Naive thymus-derived CD4-positive, alpha-beta T cell (primary cell): ENCODE measurements at regions of chr2 and their contacts with region 1.

Region 1: GRCh38 chr2:126657636-126658318 is 1.8 kb downstream of the GYPC start:
- DNase-seq: peak; percentile 40 to 79 (median 73)
- ATAC-seq: peak; percentile 72
- H3K4me3 ChIP-seq: peak overlapping the region; percentile 99
- H3K4me3 Mint-ChIP-seq: peak overlapping the region; percentile 88 to 100 (median 96)
- H3K27ac ChIP-seq: peak overlapping the region; percentile 98
- H3K27ac Mint-ChIP-seq: peak overlapping the region; percentile 93 to 100 (median 98)
- H3K4me1 ChIP-seq: peaks cover 41 to 59% of the 10 kb centered on the region in 2 donors
- H3K4me1 Mint-ChIP-seq: peaks cover 50 to 78% (median 63%) of the 10 kb centered on the region in 7 donors
- H3K27me3 ChIP-seq: no peaks in the 10 kb centered on the region
- H3K27me3 Mint-ChIP-seq: no peaks in the 10 kb centered on the region

Region 2: DNA sequence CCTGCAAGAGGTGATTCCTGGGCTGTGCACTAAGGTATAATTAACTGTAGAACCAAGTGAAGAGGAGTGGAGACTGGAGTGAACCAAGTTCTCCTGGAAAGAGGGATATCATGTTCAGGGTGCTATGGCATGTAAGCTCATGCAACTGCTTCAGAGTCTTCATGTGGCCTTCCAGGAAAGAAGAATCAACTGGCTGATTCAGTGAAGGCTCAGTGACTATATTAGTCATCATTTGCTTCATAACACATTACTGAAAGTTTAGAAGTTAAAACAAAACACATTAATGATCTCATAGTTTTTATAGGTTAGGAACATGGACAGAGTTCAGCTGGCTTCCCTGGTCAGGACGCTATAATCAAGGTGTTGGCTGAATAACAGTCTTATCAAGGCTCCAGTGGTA is 1202.7 kb before region 1 on chr2:
- CTCF ChIA-PET with region 1: no interaction called
- POLR2A ChIA-PET with region 1: no interaction called
- intact Hi-C with region 1: no loop called
- DNase-seq: no peak
- ATAC-seq: no peak
- H3K4me3 ChIP-seq: no peak overlapping the region
- H3K4me3 Mint-ChIP-seq: no peak overlapping the region
- H3K27ac ChIP-seq: no peak overlapping the region
- H3K27ac Mint-ChIP-seq: no peak overlapping the region
- H3K4me1 ChIP-seq: no peaks in the 10 kb centered on the region
- H3K4me1 Mint-ChIP-seq: no peaks in the 10 kb centered on the region
- H3K27me3 ChIP-seq: peaks cover 0 to 2% of the 10 kb centered on the region in 2 donors
- H3K27me3 Mint-ChIP-seq: no peaks in the 10 kb centered on the region

Region 3: DNA sequence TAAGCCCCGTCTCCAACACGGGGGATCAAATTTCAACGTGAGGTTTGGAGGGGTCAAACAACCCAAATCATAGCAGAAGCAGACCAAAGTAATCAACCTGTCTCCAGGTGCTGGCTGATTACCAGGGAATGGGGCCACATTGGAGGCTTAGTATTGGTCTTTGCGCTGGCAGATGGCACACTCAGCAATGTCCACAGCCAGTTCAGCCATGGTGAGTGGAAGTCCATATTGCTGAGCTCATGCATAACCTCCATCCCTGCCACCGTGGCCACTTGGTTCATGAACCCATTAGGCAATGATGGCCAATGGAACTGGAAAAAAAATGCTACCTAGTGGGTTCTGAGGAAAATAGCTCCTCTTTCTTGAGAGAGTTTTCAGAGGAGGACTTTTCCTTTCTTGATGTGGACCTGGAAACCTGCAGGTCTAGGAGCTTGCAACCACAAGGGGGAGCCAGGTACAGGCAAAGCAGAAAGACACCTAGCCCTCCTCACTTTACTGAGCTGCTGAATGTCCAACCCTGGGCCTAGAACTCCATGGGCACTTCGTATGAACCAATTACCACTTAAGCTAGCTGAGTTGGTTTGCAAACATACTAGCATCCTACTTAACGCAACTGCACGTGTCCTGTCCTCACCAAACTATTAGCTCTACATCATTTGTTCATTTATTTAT is 129.8 kb before region 1 on chr2:
- CTCF ChIA-PET with region 1: interaction called, 6 read pairs
- POLR2A ChIA-PET with region 1: interaction called, 3 read pairs
- intact Hi-C with region 1: loop called (anchors 1 to 2 kb)
- DNase-seq: peak; percentile 43 to 74 (median 64)
- ATAC-seq: peak; percentile 79
- H3K4me3 ChIP-seq: no peak overlapping the region
- H3K4me3 Mint-ChIP-seq: no peak overlapping the region
- H3K27ac ChIP-seq: no peak overlapping the region
- H3K27ac Mint-ChIP-seq: no peak overlapping the region
- H3K4me1 ChIP-seq: no peaks in the 10 kb centered on the region
- H3K4me1 Mint-ChIP-seq: no peaks in the 10 kb centered on the region
- H3K27me3 ChIP-seq: no peaks in the 10 kb centered on the region
- H3K27me3 Mint-ChIP-seq: peaks cover 0 to 3% (median 0%) of the 10 kb centered on the region in 5 donors

Region 4: GRCh38 chr2:126616606-126617069 is 41.1 kb before region 1 on chr2:
- CTCF ChIA-PET with region 1: no interaction called
- POLR2A ChIA-PET with region 1: no interaction called
- intact Hi-C with region 1: no loop called
- DNase-seq: no peak
- ATAC-seq: no peak
- H3K4me3 ChIP-seq: no peak overlapping the region
- H3K4me3 Mint-ChIP-seq: no peak overlapping the region
- H3K27ac ChIP-seq: no peak overlapping the region
- H3K27ac Mint-ChIP-seq: peak overlapping the region in 1 of 9 donors; percentile 59
- H3K4me1 ChIP-seq: no peaks in the 10 kb centered on the region
- H3K4me1 Mint-ChIP-seq: no peaks in the 10 kb centered on the region
- H3K27me3 ChIP-seq: no peaks in the 10 kb centered on the region
- H3K27me3 Mint-ChIP-seq: peaks cover 0 to 4% (median 0%) of the 10 kb centered on the region in 5 donors

Region 5: DNA sequence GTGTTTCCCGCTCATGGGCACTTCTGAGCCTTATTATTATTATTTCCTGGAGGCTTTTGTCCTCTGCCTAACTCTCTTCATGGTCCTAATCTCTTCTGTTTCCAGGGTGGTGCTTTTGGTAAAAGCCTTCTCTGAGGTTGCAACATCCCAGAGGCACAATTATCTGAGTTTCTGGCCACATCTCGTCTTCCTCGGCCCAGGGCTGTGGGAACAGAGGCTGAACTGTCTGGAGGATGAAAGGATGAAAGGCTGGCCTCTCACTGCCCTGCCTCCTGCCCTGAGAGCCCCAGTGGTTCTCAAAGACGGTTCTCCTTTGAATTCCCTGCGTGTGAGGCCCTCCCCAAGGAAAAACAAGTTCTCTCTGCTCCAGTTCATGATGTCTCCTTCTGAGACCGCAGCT is 12.0 kb after region 1 on chr2:
- CTCF ChIA-PET with region 1: no interaction called
- POLR2A ChIA-PET with region 1: interaction called, 4 read pairs
- intact Hi-C with region 1: loop called (anchors 1 kb)
- DNase-seq: no peak
- ATAC-seq: no peak
- H3K4me3 ChIP-seq: no peak overlapping the region
- H3K4me3 Mint-ChIP-seq: peak overlapping the region in 2 of 10 donors; percentile 24 to 37
- H3K27ac ChIP-seq: no peak overlapping the region
- H3K27ac Mint-ChIP-seq: peak overlapping the region in 3 of 9 donors; percentile 22 to 72 (median 59)
- H3K4me1 ChIP-seq: peaks cover 13 to 29% of the 10 kb centered on the region in 2 donors
- H3K4me1 Mint-ChIP-seq: peaks cover 40 to 95% (median 89%) of the 10 kb centered on the region in 7 donors
- H3K27me3 ChIP-seq: no peaks in the 10 kb centered on the region
- H3K27me3 Mint-ChIP-seq: no peaks in the 10 kb centered on the region

Region 6: DNA sequence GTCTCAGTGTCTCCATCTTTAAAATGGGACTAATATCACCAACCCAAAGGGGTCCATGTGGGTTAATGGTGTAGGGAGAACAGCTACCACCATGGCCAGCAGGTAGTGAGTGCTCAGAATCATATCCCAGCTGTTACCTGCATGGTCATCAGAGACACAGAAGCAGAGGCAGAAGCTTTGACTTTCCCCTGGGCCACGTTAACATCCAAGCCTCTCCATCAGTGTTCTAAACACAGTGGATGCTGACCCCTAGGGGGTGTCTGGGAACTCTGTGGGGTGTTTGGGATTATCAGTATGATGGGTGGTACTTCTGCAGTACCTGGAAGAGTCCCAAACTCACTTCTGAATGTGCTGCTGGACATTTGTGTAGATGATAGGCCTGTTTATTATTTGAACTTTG is 91.8 kb after region 1 on chr2:
- CTCF ChIA-PET with region 1: no interaction called
- POLR2A ChIA-PET with region 1: no interaction called
- intact Hi-C with region 1: loop called in 1 of 2 experiments (anchors 5 kb)
- DNase-seq: peak in 2 of 9 donors; percentile 14 to 15
- ATAC-seq: no peak
- H3K4me3 ChIP-seq: no peak overlapping the region
- H3K4me3 Mint-ChIP-seq: no peak overlapping the region
- H3K27ac ChIP-seq: no peak overlapping the region
- H3K27ac Mint-ChIP-seq: peak overlapping the region in 2 of 9 donors; percentile 5 to 11
- H3K4me1 ChIP-seq: no peaks in the 10 kb centered on the region
- H3K4me1 Mint-ChIP-seq: peaks cover 2 to 18% (median 6%) of the 10 kb centered on the region in 7 donors
- H3K27me3 ChIP-seq: no peaks in the 10 kb centered on the region
- H3K27me3 Mint-ChIP-seq: peaks cover 0 to 8% (median 0%) of the 10 kb centered on the region in 5 donors

Region 7: DNA sequence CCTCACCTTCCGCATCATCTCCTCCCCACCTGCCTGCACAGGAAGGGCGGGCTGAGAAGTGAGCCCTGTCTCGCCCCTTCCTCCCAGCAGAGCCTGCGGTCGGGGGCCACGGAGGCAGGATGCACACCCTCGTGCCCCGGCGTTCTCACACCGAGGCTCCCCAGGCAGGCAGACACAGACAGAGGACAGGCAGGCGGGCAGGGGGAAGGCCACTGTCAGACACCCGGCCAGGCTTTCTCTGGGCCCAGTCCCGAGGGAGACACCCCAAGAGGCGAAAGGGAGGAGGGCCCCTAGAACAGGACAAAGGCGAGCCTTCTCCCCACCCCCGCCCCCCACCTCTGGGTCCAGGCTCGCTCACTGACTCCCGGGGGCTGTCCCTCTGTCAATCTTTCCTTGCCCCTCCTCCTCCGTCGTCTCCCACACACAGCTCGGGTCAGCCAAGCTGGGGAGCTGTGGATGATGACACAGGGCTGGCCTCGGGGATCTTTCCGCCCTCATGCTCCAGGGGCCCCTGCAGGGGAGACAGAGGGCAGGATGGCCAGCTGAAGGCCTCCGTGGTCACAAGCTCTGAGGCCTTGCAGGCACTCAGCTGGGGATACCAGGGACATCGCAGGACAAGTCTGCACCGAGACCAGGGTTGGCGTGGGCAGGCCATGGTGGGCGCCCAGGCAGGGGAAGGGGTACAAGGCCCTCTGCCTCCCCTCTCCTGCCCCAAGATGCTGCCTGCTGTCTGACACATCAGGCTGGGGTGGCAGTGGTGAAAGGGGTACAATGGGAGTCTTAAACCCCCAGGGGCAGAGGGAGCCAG is 424.3 kb after region 1 on chr2:
- CTCF ChIA-PET with region 1: no interaction called
- POLR2A ChIA-PET with region 1: no interaction called
- intact Hi-C with region 1: loop called (anchors 5 to 10 kb)
- DNase-seq: peak; percentile 64 to 87 (median 83)
- ATAC-seq: peak; percentile 83
- H3K4me3 ChIP-seq: peak overlapping the region; percentile 99
- H3K4me3 Mint-ChIP-seq: peak overlapping the region; percentile 89 to 97 (median 94)
- H3K27ac ChIP-seq: peak overlapping the region; percentile 89
- H3K27ac Mint-ChIP-seq: peak overlapping the region; percentile 94 to 99 (median 98)
- H3K4me1 ChIP-seq: peaks cover 78 to 80% of the 10 kb centered on the region in 2 donors
- H3K4me1 Mint-ChIP-seq: peaks cover 65 to 95% (median 83%) of the 10 kb centered on the region in 7 donors
- H3K27me3 ChIP-seq: no peaks in the 10 kb centered on the region
- H3K27me3 Mint-ChIP-seq: no peaks in the 10 kb centered on the region

Region 8: GRCh38 chr2:128027801-128028667 is 1370.3 kb after region 1 on chr2 and contains the start of gene SAP130:
- CTCF ChIA-PET with region 1: no interaction called
- POLR2A ChIA-PET with region 1: no interaction called
- intact Hi-C with region 1: loop called in 1 of 2 experiments (anchors 5 kb)
- DNase-seq: peak; percentile 96 to 99 (median 98)
- ATAC-seq: peak; percentile 86
- H3K4me3 ChIP-seq: peak within 1 kb of the TSS; percentile 86
- H3K4me3 Mint-ChIP-seq: peak within 1 kb of the TSS; percentile 87 to 98 (median 98)
- H3K27ac ChIP-seq: peak within 1 kb of the TSS; percentile 91
- H3K27ac Mint-ChIP-seq: peak within 1 kb of the TSS; percentile 52 to 97 (median 93)
- H3K4me1 ChIP-seq: peaks cover 0 to 14% of the 10 kb centered on the region in 2 donors
- H3K4me1 Mint-ChIP-seq: peaks cover 14 to 32% (median 28%) of the 10 kb centered on the region in 7 donors
- H3K27me3 ChIP-seq: no peaks in the 10 kb centered on the region
- H3K27me3 Mint-ChIP-seq: peaks cover 0 to 16% (median 0%) of the 10 kb centered on the region in 5 donors
- total RNA-seq, gene SAP130: 29.9 to 38.0 (median 30.9) TPM